ENCODE measurements at regions of chr2 and their contacts with region 1.

Region 1: DNA sequence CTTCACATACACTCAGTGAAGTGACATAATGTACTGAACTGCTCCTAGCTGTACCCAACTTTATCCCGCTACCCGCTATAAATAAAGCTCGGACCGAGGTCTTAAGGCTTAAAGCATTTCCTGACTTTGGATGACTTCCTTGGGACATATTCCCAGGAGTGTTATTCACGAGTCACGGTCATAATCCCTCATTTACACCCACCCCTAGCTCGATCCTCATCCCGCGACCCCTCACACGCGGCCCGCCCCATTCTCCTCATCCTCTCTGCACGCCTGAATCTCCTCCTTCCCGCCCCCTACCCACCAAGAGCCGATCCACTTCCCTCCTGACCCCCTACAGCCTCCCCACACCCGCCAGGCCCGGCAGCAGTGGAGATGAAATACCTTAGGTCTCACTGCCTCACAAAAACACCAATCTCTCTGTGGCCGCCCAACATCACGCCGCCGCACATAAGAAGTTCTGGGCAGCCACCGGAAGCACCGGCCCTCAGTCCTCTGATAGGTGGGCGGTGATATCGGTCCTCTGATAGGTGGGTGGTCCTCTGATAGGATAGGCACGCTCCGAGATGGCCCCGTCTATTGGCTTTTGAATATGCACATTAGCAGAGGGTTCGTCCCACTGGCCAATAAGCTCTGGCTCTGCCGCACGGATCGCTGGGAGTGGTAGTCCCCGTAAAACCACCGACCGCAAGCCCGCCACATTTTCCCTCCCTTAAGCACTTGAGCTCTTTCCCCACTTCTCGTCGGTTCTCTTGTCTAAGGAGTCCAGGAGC is at the start of gene WDCP:
- DNase-seq: peak; percentile 90
- ATAC-seq: peak; percentile 100
- H3K4me3 Mint-ChIP-seq: peak within 1 kb of the TSS; percentile 99
- H3K27ac Mint-ChIP-seq: peak within 1 kb of the TSS; percentile 95
- H3K4me1 Mint-ChIP-seq: peaks cover 24% of the 10 kb centered on the region
- H3K27me3 Mint-ChIP-seq: peaks cover 2% of the 10 kb centered on the region
- total RNA-seq, gene WDCP: 15.6 to 19.4 TPM

Region 2: GRCh38 chr2:23939987-23940717 is 107.0 kb before region 1 on chr2 and contains the start of gene UBXN2A:
- POLR2A ChIA-PET with region 1: interaction called, 15 read pairs
- DNase-seq: peak; percentile 93
- ATAC-seq: peak; percentile 89
- H3K4me3 Mint-ChIP-seq: peak within 1 kb of the TSS; percentile 96
- H3K27ac Mint-ChIP-seq: peak within 1 kb of the TSS; percentile 88
- H3K4me1 Mint-ChIP-seq: peaks cover 16% of the 10 kb centered on the region
- H3K27me3 Mint-ChIP-seq: peaks cover 9% of the 10 kb centered on the region
- total RNA-seq, gene UBXN2A: 11.2 to 12.4 TPM

Region 3: GRCh38 chr2:24075915-24076848 is 29.1 kb after region 1 on chr2 and contains the start of gene SF3B6:
- POLR2A ChIA-PET with region 1: interaction called, 43 read pairs
- DNase-seq: peak; percentile 99
- ATAC-seq: peak; percentile 86
- H3K4me3 Mint-ChIP-seq: peak within 1 kb of the TSS; percentile 94
- H3K27ac Mint-ChIP-seq: peak within 1 kb of the TSS; percentile 97
- H3K4me1 Mint-ChIP-seq: peaks cover 27% of the 10 kb centered on the region
- H3K27me3 Mint-ChIP-seq: no peaks in the 10 kb centered on the region
- total RNA-seq, gene SF3B6: 66.5 to 71.2 TPM

Region 4: DNA sequence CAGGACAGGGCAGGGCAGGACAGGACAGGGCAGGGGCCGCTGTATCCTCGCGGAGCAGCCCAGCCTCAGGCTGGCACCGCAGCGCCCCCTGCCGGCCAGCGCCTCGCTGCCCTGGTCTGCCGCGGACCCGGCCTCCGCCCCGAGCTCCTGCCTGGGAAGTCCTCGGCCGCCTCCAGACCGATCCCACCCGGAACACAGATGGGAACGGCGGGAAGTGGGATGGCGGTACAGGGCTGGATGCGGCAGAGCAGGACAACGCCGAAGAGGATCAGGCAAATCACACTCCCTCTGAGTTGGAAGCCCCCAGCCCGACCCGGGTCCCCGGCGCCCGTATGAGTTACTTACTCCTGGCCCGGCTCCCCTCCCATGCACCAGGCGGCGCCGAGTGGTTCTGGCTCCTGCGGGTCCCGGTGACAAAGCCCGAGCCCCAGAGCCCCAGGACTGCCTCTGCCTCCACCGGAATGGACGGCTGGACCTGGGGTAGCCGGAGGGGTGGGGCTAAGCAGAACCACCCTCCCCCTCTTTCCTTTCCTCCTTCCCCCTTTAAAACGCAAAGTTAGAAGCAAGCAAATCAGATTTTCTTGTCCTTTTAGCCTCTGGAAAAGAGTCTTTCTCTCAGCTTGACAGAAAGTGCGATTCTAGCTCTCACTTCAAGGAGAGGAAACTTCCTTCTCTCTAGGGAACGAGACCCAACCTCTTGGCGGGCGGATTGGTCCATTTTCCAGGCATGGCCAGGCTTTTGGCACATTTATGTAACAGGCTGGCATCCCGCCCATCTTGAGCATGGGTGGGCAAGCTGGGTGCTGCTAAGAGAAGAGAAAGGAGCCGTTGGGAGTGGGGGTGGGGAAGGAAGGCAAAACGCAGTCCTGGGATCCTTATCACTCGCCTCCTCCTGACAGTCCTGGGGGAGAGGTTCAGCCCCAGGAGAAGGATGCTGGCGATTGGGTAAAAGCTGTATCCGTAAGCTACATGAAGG is 37.6 kb after region 1 on chr2 and contains the start of gene TP53I3:
- POLR2A ChIA-PET with region 1: interaction called, 10 read pairs
- DNase-seq: peak; percentile 96
- ATAC-seq: peak; percentile 93
- H3K4me3 Mint-ChIP-seq: peak within 1 kb of the TSS; percentile 96
- H3K27ac Mint-ChIP-seq: peak within 1 kb of the TSS; percentile 95
- H3K4me1 Mint-ChIP-seq: peaks cover 25% of the 10 kb centered on the region
- H3K27me3 Mint-ChIP-seq: no peaks in the 10 kb centered on the region
- total RNA-seq, gene TP53I3: 3.6 to 3.7 TPM